ENCODE measurements at regions of chr11 and their contacts with region 1.

Region 1: GRCh38 chr11:35337136-35337918 is 82.0 kb downstream of the SLC1A2 start:
- DNase-seq: peak; percentile 86 to 92 (median 92)
- H3K4me3 ChIP-seq: no peak overlapping the region
- H3K4me3 Mint-ChIP-seq: no peak overlapping the region
- H3K27ac ChIP-seq: peak overlapping the region in 1 of 2 donors; percentile 83
- H3K27ac Mint-ChIP-seq: peak overlapping the region; percentile 73 to 95 (median 89)
- H3K4me1 ChIP-seq: peaks cover 7 to 24% of the 10 kb centered on the region in 2 donors
- H3K4me1 Mint-ChIP-seq: peaks cover 23% of the 10 kb centered on the region
- H3K27me3 ChIP-seq: no peaks in the 10 kb centered on the region
- H3K27me3 Mint-ChIP-seq: peaks cover 0 to 3% (median 2%) of the 10 kb centered on the region in 3 donors
- CTCF ChIP-seq: no peak

Region 2: DNA sequence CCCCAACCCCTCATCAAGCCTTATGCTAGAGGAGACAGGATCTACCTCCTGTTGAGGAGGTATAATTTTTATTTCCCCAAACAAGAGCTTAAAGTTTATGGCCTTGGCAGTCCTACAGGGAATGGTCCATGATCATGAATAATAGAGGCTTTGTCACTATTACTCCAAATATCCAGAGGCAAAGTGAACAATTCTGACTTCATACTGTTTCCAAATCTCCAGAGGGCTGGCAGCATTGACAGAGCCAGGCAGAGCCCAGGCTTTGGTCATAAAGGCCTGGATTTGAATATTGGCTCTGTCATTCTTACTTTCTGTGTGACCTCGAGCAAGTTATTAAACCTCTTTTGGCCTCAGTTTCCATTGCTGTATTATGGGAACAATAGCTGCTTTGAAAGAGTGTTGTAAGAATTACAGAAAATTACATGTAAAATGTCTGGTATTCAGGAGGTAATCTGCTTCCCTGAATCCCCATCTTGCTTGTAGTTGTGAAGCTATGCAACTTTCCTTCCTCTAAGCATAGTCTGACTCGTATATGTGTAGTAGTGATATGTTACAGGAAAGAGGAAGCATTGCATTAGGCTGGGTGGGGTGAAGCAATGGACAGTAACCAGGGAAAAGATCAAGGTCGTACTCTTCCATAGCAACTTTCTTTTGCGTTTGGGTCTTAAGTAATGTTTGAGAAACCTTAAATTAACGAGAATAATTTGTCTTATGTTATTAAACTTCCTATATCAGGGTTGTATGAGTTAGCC is 109.6 kb before region 1 on chr11:
- intact Hi-C with region 1: loop called in 1 of 2 experiments (anchors 5 kb)
- DNase-seq: peak; percentile 82 to 94 (median 93)
- H3K4me3 ChIP-seq: peak overlapping the region in 1 of 3 experiments; percentile 28
- H3K4me3 Mint-ChIP-seq: peak overlapping the region in 1 of 2 donors; percentile 51
- H3K27ac ChIP-seq: peak overlapping the region; percentile 86 to 89
- H3K27ac Mint-ChIP-seq: peak overlapping the region; percentile 95 to 99 (median 98)
- H3K4me1 ChIP-seq: peaks cover 43 to 46% of the 10 kb centered on the region in 2 donors
- H3K4me1 Mint-ChIP-seq: peaks cover 43% of the 10 kb centered on the region
- H3K27me3 ChIP-seq: no peaks in the 10 kb centered on the region
- H3K27me3 Mint-ChIP-seq: no peaks in the 10 kb centered on the region
- CTCF ChIP-seq: no peak

Region 3: GRCh38 chr11:36240801-36241200 is 903.5 kb after region 1 on chr11:
- intact Hi-C with region 1: no loop called
- DNase-seq: no peak
- H3K4me3 ChIP-seq: no peak overlapping the region
- H3K4me3 Mint-ChIP-seq: no peak overlapping the region
- H3K27ac ChIP-seq: no peak overlapping the region
- H3K27ac Mint-ChIP-seq: no peak overlapping the region
- H3K4me1 ChIP-seq: no peaks in the 10 kb centered on the region
- H3K4me1 Mint-ChIP-seq: peaks cover 2% of the 10 kb centered on the region
- H3K27me3 ChIP-seq: no peaks in the 10 kb centered on the region
- H3K27me3 Mint-ChIP-seq: peaks cover 2 to 7% (median 7%) of the 10 kb centered on the region in 3 donors
- CTCF ChIP-seq: no peak

Measured in CD14-positive monocyte (primary cell).